Activated CD4-positive, alpha-beta T cell treated with anti-CD3 and anti-CD28 coated beads, Interleukin-2, amount 10 ng/mL, durations not matched to agents 24 days and 14 days (primary cell): ENCODE measurements at regions of chr4 and their contacts with region 1.

Region 1: DNA sequence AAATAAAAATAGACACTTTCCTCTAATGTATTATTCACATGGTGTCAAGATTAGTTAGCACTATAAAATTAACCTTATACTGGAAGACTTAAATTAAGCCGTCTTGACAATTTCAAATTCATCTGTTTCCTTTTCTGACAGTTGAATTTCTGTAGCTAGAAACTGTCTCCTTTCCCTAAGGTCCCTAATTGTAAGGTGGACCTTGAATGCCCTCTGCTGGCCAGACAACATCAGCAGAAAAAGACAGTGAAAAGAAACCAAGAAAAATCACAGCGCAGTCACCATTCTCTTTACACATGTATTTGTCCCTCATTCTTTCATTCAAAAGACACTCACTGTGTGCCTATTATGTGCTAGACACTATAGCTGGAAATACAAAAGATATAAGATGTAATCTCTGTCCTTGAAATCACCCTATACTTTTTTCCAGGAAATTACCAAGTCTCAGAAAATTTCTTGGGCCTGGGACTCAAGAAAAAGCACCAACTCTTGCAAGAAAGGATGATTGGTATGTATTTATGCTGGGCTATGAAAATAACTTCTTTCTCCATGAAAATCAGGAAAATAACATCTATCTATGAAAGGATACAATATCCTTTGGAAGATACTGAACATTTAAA is 32.7 kb upstream of the AMBN start:
- DNase-seq: peak; percentile 75
- H3K4me3 Mint-ChIP-seq: no peak overlapping the region
- H3K27ac Mint-ChIP-seq: no peak overlapping the region
- H3K4me1 Mint-ChIP-seq: no peaks in the 10 kb centered on the region
- H3K27me3 Mint-ChIP-seq: peaks cover 1% of the 10 kb centered on the region

Region 2: GRCh38 chr4:69322055-69322454 is 1237.3 kb before region 1 on chr4:
- intact Hi-C with region 1: loop called (anchors 5 kb)
- DNase-seq: no peak
- H3K4me3 Mint-ChIP-seq: no peak overlapping the region
- H3K27ac Mint-ChIP-seq: no peak overlapping the region
- H3K4me1 Mint-ChIP-seq: no peaks in the 10 kb centered on the region
- H3K27me3 Mint-ChIP-seq: no peaks in the 10 kb centered on the region

Region 3: GRCh38 chr4:70480650-70481049 is 78.7 kb before region 1 on chr4:
- intact Hi-C with region 1: no loop called
- DNase-seq: no peak
- H3K4me3 Mint-ChIP-seq: no peak overlapping the region
- H3K27ac Mint-ChIP-seq: no peak overlapping the region
- H3K4me1 Mint-ChIP-seq: peaks cover 3% of the 10 kb centered on the region
- H3K27me3 Mint-ChIP-seq: no peaks in the 10 kb centered on the region